Endothelial cell of umbilical vein (primary cell): ENCODE measurements at regions of chr9 and their contacts with region 1.

Region 1: GRCh38 chr9:33404788-33405362 is 2.5 kb upstream of the AQP7 start:
- DNase-seq: no peak
- H3K4me3 ChIP-seq: no peak overlapping the region
- H3K27ac ChIP-seq: no peak overlapping the region
- H3K4me1 ChIP-seq: no peaks in the 10 kb centered on the region
- H3K27me3 ChIP-seq: no peaks in the 10 kb centered on the region
- CTCF ChIP-seq: no peak
- POLR2A ChIP-seq: no peak

Region 2: DNA sequence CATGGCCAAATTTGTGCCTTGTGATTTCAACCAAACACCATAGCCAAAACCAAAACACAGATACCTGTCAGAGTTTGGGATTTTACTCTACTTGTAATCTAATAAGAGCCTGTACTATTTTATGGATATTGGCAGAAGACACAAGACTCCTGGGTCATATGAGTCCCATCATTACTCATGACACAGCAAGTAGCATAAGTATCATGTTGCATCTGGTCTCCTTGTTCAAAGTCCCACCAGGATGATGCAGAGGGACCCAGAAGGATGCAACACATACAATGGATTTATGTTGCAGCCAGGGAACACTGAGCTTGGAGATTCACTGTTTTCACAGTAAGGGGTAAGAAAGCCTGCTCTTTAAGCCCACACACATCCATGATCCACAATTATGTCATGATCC is 1033.6 kb before region 1 on chr9:
- CTCF ChIA-PET with region 1: no interaction called
- POLR2A ChIA-PET with region 1: no interaction called
- dilution Hi-C with region 1: no loop called
- intact Hi-C with region 1: no loop called
- DNase-seq: no peak
- H3K4me3 ChIP-seq: no peak overlapping the region
- H3K27ac ChIP-seq: no peak overlapping the region
- H3K4me1 ChIP-seq: no peaks in the 10 kb centered on the region
- H3K27me3 ChIP-seq: peaks cover 2 to 9% of the 10 kb centered on the region in 2 experiments
- CTCF ChIP-seq: no peak
- POLR2A ChIP-seq: no peak

Region 3: GRCh38 chr9:33393581-33393980 is 11.3 kb before region 1 on chr9:
- CTCF ChIA-PET with region 1: interaction called, 4 read pairs
- POLR2A ChIA-PET with region 1: no interaction called
- dilution Hi-C with region 1: no loop called
- intact Hi-C with region 1: loop called (anchors 1 kb)
- DNase-seq: no peak
- H3K4me3 ChIP-seq: no peak overlapping the region
- H3K27ac ChIP-seq: no peak overlapping the region
- H3K4me1 ChIP-seq: peaks cover 5% of the 10 kb centered on the region
- H3K27me3 ChIP-seq: no peaks in the 10 kb centered on the region
- CTCF ChIP-seq: no peak
- POLR2A ChIP-seq: no peak

Region 4: DNA sequence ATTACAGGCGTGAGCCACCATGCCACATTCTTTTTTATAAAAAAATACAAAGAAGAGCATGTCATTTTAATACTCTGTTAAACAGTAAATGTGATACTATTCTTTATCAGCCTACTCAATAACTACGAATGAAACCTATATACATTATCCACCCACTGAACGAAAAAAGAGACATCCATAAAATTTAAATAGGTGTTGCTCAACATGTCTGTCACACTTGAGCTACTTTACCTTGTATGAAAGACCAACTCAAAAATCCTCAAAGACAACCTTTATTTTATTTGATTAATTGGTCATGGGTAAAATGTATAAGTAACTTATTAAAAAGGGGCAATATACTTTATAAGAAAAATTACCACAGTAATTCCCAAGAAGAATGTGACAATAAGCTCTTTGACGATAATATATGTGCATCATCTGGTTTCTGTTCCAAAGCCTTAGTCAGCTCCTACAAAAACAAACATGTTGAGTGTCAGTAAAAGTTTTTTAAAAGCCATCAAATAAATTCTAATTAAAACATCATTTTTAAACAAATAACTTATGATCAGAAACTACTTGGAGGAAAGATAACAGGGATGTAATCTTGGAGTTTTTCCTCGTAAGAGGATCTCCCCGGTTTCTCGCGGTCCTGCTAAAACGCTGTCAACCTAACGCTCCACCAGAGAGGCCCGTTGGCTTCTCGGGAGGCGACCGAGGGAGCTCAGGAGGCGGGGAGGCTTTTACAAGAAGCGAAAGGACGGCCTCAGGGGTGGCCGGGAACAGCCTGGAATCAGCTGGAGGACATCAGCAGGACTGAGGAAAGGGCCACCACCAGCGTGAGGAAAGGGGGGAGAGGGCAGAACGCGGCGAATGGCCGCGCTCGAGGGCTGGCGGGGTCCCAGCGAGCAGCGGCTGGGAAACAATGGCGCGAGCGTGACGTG is 105.6 kb after region 1 on chr9:
- CTCF ChIA-PET with region 1: no interaction called
- POLR2A ChIA-PET with region 1: no interaction called
- dilution Hi-C with region 1: no loop called
- intact Hi-C with region 1: loop called (anchors 10 kb)
- DNase-seq: peak; percentile 78
- H3K4me3 ChIP-seq: peak overlapping the region; percentile 75 to 84 (median 79)
- H3K27ac ChIP-seq: peak overlapping the region; percentile 100
- H3K4me1 ChIP-seq: peaks cover 28% of the 10 kb centered on the region
- H3K27me3 ChIP-seq: no peaks in the 10 kb centered on the region
- CTCF ChIP-seq: no peak
- POLR2A ChIP-seq: peak; percentile 83